ENCODE measurements at regions of chr11 and their contacts with region 1.

Region 1: DNA sequence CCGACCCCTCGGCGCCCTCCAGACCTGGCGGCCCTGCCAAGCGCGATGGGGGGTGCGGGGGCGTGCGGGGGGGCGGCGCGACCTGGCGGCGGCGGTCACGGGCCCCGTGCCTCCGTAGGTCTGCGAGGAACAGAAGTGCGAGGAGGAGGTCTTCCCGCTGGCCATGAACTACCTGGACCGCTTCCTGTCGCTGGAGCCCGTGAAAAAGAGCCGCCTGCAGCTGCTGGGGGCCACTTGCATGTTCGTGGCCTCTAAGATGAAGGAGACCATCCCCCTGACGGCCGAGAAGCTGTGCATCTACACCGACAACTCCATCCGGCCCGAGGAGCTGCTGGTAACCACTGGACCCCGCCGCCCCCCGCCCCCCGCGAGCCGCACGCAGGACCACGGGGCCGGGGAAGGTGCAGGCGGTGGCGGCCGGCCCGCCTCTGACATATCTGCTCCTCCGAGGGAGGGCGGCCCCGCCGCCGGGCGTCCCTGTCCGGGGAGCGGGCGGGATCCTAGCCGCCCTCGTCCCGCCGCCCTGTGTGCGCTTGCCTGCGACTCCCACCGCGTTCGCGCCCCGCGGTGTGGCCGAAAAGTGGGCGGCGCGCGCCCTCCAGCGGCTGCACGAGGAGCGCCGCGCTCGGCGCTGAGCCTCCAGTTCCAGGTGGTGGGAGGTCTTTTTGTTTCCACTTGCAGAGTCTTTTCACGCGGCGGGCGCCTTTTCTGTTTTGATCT is 2.1 kb downstream of the CCND1 start:
- DNase-seq: peak; percentile 77 to 88
- ATAC-seq: peak; percentile 40 to 70 (median 64)
- H3K4me3 ChIP-seq: peak overlapping the region; percentile 77 to 99 (median 84)
- H3K27ac ChIP-seq: peak overlapping the region; percentile 90 to 99 (median 95)
- H3K4me1 ChIP-seq: peaks cover 16 to 80% (median 59%) of the 10 kb centered on the region in 9 donors
- H3K27me3 ChIP-seq: peaks cover 0 to 42% (median 2%) of the 10 kb centered on the region in 7 donors
- CTCF ChIP-seq: peak; percentile 78 to 98 (median 94)

Region 2: DNA sequence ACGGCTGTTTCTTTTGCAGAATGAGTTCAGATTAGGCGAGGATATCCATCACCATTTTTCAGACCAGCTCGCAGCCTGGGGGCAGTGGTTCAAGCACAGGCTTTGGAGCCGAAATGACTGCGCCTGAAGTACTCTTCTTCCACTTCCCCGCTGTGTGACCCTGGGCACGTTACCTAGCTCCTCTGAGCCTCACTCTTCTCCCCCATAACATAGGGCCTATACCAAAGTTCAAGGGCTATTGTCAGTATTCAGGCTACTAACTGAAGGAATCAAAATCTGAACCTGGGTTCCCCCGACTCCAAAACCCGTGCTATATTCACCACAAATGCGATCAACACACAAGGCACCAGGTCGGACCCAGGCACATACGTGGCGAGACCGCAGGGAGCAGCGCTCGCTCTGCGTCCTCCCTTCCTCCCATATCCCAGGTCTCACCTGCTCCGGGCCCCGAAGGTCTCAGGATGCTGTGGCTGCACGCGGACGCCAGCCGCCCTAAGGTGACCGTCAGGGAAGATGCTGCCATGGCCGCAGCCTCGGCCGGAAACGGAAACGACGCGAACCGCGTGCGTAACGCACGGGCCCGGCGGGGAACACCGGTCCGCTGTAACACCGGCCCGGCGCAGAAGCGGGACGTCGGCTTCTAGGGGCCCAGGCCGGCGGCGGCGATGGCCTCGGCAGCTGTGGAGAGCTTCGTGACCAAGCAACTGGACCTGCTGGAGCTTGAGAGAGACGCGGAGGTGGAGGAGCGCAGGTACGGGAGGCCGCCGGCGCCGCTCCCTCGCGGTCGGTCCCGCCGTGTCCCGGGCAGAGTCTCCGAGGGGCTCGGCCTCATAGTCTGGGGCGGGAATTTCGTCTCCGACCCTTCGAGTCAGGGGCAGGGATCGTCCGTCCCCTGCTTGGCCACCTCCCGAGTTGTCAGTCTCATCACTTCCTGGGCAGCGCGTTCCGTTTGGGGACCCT is 739.5 kb before region 1 on chr11 and contains the starts of genes IGHMBP2 and MRPL21:
- intact Hi-C with region 1: loop called in 3 of 10 experiments (anchors 10 kb)
- DNase-seq: peak; percentile 83 to 84
- ATAC-seq: peak; percentile 94 to 98 (median 97)
- H3K4me3 ChIP-seq: peak within 1 kb of the TSS; percentile 70 to 95 (median 86)
- H3K27ac ChIP-seq: peak within 1 kb of the TSS; percentile 26 to 94 (median 90)
- H3K4me1 ChIP-seq: peaks cover 13 to 43% (median 34%) of the 10 kb centered on the region in 9 donors
- H3K27me3 ChIP-seq: no peaks in the 10 kb centered on the region
- CTCF ChIP-seq: no peak
- total RNA-seq, gene IGHMBP2: 9.0 to 17.7 (median 12.1) TPM
- total RNA-seq, gene MRPL21: 63.2 to 138 (median 96.7) TPM

Region 3: GRCh38 chr11:69122642-69123431 is 520.2 kb before region 1 on chr11:
- intact Hi-C with region 1: loop called in 3 of 10 experiments (anchors 5 kb)
- DNase-seq: peak; percentile 66 to 71
- ATAC-seq: peak; percentile 72 to 93 (median 90)
- H3K4me3 ChIP-seq: peak overlapping the region in 3 of 10 donors; percentile 10 to 24 (median 18)
- H3K27ac ChIP-seq: peak overlapping the region in 9 of 10 donors; percentile 11 to 85 (median 71)
- H3K4me1 ChIP-seq: peaks cover 12 to 35% (median 22%) of the 10 kb centered on the region in 9 donors
- H3K27me3 ChIP-seq: no peaks in the 10 kb centered on the region
- CTCF ChIP-seq: no peak

Region 4: DNA sequence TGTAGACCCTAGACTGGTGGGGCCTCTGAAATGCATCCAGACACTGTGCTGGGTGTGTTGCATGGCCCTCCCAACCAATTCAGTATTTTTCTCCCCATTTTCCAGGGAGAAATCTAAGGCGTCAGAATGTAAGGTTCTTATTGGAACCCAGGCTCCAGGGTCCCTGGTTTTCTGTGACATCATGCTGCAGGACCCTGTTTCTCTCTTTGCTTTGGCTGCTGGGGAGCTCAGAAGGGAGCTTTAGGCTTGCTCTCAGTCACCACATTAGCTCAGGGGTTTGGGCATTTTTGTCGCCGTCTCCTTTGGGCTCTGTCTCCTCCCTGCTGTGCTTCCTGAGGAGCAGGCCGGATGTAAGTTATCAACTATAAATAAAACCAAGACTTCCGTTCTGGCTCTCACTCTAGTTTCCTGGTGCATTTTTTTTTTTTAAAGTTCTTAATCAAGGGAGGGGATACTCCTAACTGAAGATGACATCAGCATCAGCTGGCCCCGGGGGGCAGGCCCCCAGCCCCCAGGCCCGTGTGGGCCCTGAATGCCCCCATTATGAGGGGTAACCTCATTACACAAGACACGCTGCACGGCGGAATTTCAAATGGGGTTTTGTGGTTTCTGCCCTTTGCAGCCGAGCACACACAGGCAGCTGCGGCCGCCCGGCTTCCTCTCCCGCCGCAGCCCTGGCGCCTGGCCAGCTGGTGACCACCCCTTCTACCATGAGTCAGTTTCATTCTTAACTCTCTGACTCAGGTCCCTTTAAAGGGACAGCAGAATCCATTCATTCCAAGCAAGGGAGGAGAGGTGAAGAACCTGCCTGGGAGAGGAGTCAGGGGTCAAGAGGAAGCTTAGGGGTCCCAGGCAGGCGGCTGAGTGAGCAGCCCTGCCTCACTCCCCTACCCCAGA is 345.9 kb before region 1 on chr11:
- intact Hi-C with region 1: loop called (anchors 2 to 5 kb)
- DNase-seq: peak; percentile 95
- ATAC-seq: peak; percentile 73 to 95 (median 89)
- H3K4me3 ChIP-seq: peak overlapping the region in 8 of 10 donors; percentile 6 to 37 (median 26)
- H3K27ac ChIP-seq: peak overlapping the region; percentile 17 to 94 (median 83)
- H3K4me1 ChIP-seq: peaks cover 26 to 79% (median 56%) of the 10 kb centered on the region in 9 donors
- H3K27me3 ChIP-seq: no peaks in the 10 kb centered on the region
- CTCF ChIP-seq: no peak

Region 5: DNA sequence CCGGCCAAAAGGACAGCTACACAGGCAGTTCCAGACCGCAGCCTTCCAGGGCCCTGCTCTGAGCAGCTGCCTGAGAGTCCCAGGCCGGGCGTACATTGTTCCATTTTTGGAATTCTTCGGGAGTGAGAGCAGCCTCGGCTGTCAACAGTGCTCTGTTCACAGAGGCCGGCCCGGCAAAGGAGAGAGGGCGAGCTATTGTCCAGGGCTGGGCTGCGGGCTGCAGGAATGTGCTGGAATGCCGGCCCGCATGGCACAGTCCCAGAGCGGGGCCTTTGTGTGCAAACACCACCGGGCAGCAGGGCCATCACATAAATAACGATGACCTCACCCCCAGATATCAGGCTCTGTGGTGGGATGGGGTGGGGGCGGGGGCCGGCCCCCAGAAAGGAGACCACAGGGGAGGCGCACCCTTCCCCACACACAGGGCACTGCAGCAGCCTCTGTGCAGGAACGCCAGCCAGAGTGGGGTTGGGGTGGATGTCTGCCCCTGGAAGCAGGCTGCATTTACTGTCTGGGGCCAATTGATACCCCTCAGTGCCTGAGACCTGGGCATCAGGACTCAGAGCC is 145.8 kb before region 1 on chr11:
- intact Hi-C with region 1: loop called in 4 of 10 experiments (anchors 1 to 10 kb)
- DNase-seq: peak; percentile 84 to 88
- ATAC-seq: peak; percentile 94 to 97 (median 95)
- H3K4me3 ChIP-seq: no peak overlapping the region
- H3K27ac ChIP-seq: peak overlapping the region; percentile 63 to 92 (median 90)
- H3K4me1 ChIP-seq: peaks cover 16 to 55% (median 35%) of the 10 kb centered on the region in 9 donors
- H3K27me3 ChIP-seq: no peaks in the 10 kb centered on the region
- CTCF ChIP-seq: no peak

Region 6: GRCh38 chr11:69524282-69524911 is 118.7 kb before region 1 on chr11:
- intact Hi-C with region 1: no loop called
- DNase-seq: no peak
- ATAC-seq: no peak
- H3K4me3 ChIP-seq: no peak overlapping the region
- H3K27ac ChIP-seq: no peak overlapping the region
- H3K4me1 ChIP-seq: peaks cover 0 to 5% (median 0%) of the 10 kb centered on the region in 9 donors
- H3K27me3 ChIP-seq: peaks cover 0 to 6% (median 0%) of the 10 kb centered on the region in 7 donors
- CTCF ChIP-seq: no peak

Region 7: DNA sequence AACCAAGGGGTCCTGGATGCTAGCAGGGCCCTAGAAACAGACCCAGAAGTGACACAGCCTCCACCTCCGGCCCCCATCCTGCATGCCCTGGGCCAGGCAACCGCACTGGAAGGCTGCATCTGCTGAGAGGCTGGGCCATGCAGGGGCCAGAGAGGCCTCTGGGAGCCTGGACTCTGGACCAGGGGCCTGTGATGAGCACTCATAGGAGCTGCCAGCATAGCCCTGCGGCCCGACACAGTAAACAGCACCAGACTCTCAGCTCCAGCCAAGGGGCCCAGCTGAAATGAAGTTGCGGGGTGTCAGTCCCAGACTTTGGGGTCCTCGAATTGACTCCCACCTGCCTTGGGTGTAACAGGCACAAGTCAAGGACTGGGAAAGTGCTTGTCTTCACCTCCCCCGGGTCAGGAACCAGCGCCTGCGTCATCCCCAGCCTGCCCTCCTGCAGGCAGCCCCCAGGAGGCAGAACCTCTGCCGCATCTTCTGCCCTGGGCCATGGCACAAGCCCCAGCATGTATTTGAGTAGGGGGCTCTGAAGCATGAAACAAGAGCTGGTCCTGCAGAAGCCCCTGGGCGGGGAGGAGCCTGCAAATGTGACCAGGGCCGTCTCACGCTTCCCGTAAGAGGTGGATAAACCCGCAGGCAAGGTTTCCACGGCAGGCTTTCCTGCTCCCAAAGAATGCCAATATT is 27.4 kb before region 1 on chr11:
- intact Hi-C with region 1: no loop called
- DNase-seq: no peak
- ATAC-seq: no peak
- H3K4me3 ChIP-seq: no peak overlapping the region
- H3K27ac ChIP-seq: no peak overlapping the region
- H3K4me1 ChIP-seq: no peaks in the 10 kb centered on the region
- H3K27me3 ChIP-seq: no peaks in the 10 kb centered on the region
- CTCF ChIP-seq: no peak

Region 8: DNA sequence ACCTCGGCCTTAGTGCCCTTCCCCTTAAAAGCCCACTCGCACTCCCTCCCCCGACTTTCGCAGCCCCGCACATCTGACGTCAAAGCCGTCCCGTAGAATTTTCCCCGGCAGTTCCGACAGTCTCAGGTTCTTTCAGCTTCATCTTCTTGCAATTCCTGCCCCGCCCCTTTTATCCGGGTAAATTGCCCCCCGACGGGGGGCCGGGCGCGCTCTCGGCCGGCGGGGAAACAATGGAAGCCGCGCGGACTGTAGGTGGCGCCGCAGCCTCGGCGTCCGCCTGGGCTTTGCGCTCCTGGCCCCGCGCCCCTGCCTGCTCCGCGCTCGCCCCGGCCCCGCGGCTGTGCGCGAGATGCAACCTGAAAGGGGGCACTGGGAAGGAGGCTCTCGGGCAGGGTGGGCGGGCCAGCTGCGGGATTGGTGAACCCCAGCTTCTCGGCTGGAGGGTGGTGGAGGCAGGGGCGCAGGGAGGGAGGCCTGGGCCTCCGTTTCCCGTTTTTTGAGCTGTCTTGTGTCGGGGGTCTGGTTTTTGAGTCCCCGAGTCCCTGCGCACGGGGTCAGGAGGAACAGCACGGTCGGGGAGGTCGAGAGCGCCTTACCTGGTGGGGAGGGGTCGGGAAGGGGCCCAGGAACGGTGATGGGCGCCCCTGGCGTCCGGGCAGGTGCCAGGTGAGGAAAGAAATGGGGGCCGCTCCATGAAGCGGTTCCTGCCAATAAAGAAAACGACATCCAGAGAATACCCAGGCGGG is 61.6 kb after region 1 on chr11:
- intact Hi-C with region 1: no loop called
- DNase-seq: no peak
- ATAC-seq: peak in 5 of 8 donors; percentile 35 to 61 (median 50)
- H3K4me3 ChIP-seq: peak overlapping the region in 9 of 10 donors; percentile 0 to 38 (median 17)
- H3K27ac ChIP-seq: no peak overlapping the region
- H3K4me1 ChIP-seq: peaks cover 5 to 40% (median 26%) of the 10 kb centered on the region in 9 donors
- H3K27me3 ChIP-seq: peaks cover 24 to 92% (median 83%) of the 10 kb centered on the region in 7 donors
- CTCF ChIP-seq: peak in 8 of 9 donors; percentile 7 to 64 (median 48)

Measured in heart right ventricle (tissue), 16 donors.